ENCODE measurements at regions of chr22 and their contacts with region 1.

Region 1: DNA sequence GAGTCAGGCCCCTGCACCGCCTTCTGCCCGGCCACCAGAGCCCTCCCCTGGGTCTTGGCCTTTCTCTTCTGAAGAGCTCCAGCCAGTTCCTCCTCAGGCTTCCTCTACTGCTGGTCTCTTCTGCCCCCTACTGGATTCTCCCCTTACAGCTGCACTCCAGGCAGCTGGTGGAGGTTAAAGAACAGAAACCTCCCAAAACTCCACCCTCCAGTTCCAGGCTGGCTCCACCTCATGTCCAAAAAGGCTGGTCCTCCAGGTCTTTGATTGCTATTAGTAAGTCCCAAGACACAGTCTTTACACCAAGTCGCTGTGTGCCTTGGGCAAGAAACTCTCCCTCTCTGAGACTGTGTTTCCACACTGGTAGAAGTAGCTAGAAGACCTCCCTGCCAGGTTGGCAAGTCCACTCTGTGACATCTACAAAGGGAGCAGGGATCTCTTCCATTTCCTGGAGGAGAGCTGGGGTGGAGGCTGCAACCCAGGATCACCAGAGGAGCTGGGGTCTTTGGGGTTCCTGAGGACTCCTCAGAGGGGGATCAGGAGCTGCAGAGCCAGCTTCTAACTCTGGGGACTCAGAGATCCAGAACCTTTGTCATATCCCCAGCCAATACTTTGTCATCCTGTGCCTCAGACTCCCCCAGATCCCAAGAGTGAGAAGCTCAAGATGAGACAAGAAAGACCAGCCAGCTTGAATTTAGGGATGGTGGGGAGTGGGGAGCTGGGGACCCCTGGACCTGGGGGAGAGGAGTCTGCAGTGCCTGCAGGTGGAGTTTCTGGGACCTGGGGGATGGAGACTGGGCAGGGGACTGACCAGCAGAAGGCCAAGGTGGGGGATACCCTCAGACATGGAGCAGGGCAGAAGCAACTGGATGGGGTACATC is 3.4 kb upstream of the IGLL5 start:
- DNase-seq: peak; percentile 85
- H3K4me3 Mint-ChIP-seq: no peak overlapping the region
- H3K27ac Mint-ChIP-seq: no peak overlapping the region
- H3K4me1 Mint-ChIP-seq: peaks cover 18% of the 10 kb centered on the region
- H3K27me3 Mint-ChIP-seq: peaks cover 91% of the 10 kb centered on the region

Region 2: DNA sequence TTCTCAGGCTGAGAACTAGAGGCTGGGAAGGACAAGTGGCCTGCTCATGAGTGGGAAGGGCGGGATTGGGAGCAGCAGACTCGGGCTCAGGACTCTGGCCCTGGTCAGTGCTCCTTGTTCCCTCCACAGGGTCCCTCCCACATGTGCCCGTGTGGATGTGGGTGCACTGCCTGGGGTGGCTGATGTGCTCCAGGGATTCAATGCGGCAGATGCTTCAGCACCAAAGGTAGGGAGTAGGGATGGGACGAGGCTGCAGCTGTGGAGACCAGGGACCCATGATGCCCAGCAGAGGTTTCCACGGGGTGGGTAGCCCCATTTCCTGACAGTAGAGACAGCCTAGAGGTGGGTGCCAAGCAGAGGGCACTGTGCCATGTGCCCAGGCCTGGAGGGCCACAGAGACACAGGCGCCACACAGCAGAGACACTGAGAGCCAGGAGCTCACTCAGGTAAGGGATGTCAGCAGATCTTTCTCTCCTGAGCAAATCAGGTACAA is 150.3 kb before region 1 on chr22:
- CTCF ChIA-PET with region 1: no interaction called
- DNase-seq: no peak
- H3K4me3 Mint-ChIP-seq: no peak overlapping the region
- H3K27ac Mint-ChIP-seq: no peak overlapping the region
- H3K4me1 Mint-ChIP-seq: no peaks in the 10 kb centered on the region
- H3K27me3 Mint-ChIP-seq: peaks cover 50% of the 10 kb centered on the region

Region 3: DNA sequence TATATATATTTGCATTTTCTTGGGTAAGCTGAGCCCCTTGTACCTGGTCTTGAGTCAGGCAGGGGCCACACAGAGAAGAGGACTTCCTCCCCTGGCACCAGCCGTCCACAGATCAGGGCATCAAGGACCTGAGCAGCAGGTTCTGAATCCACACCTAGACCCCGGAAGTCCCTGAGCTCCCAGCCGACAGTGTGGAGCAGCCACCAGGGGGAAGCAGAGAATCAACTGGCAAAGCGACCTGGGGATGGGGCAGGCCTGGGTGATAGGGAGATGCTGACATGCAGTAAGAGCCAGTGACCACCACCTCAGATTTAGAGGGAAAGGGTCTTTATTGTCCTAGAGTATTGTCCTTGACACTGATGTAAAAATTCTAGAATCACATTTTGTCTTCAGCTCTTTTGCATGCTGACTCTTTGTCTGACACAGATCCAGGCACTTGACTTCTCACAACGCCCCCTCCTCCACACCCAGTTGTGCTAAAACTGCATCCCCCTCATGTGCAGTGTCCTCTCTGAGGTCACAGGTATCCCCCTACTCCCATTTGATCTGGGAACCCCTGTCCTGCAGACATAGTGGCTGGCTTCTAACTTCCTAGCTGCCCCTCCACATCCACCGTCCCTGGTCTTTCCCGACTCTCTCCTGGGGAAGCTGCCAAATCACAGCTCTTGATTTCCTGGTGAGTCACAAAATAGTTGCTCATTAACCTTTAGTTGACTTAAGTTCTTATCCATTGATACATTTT is 130.6 kb before region 1 on chr22:
- CTCF ChIA-PET with region 1: interaction called, 61 read pairs
- DNase-seq: peak; percentile 87
- H3K4me3 Mint-ChIP-seq: no peak overlapping the region
- H3K27ac Mint-ChIP-seq: no peak overlapping the region
- H3K4me1 Mint-ChIP-seq: peaks cover 7% of the 10 kb centered on the region
- H3K27me3 Mint-ChIP-seq: peaks cover 19% of the 10 kb centered on the region

Region 4: GRCh38 chr22:22787786-22788459 is 96.3 kb before region 1 on chr22:
- CTCF ChIA-PET with region 1: interaction called, 96 read pairs
- DNase-seq: peak; percentile 78
- H3K4me3 Mint-ChIP-seq: no peak overlapping the region
- H3K27ac Mint-ChIP-seq: no peak overlapping the region
- H3K4me1 Mint-ChIP-seq: peaks cover 16% of the 10 kb centered on the region
- H3K27me3 Mint-ChIP-seq: peaks cover 38% of the 10 kb centered on the region

Region 5: GRCh38 chr22:22810018-22810427 is 74.2 kb before region 1 on chr22:
- CTCF ChIA-PET with region 1: interaction called, 191 read pairs
- DNase-seq: peak; percentile 85
- H3K4me3 Mint-ChIP-seq: no peak overlapping the region
- H3K27ac Mint-ChIP-seq: no peak overlapping the region
- H3K4me1 Mint-ChIP-seq: peaks cover 23% of the 10 kb centered on the region
- H3K27me3 Mint-ChIP-seq: peaks cover 23% of the 10 kb centered on the region

Region 6: DNA sequence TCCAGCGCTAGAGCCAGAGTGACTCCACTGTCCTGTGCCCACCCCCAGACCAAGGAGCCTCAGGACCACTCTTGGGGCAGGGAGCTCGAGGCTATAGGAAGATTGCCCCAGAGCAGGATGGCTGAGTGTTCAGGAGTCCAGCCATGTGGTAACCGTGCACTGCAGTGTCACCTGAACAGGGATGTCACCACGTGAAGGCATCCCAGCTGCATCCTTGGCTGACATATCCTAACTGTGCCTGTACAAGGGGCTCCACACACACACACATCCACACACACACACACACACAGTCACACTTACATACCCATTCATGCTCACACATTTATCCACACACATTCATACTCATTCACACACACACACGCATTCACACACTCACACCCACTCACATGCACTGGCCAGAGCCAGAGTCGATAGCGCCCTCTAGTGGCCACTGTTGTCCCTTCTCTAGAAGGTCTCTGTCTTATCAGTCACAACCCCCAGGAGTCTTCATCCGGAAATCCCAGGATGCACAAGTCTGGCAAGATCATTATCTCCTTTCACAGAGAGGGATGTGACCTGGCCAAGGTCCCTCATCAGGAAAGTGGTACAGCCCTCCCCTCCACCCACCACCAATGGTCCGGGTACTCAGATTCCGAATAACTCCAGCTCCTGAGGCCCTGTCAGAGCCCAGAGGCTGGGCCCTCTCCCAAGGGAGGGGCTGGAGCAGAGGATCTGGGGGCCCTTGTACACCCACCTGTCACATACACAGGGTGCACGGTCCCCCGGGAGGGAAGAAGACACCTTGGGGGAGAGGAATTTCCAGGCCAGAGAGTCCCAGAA is 58.5 kb after region 1 on chr22:
- CTCF ChIA-PET with region 1: interaction called, 17 read pairs
- DNase-seq: peak; percentile 89
- H3K4me3 Mint-ChIP-seq: no peak overlapping the region
- H3K27ac Mint-ChIP-seq: no peak overlapping the region
- H3K4me1 Mint-ChIP-seq: peaks cover 2% of the 10 kb centered on the region
- H3K27me3 Mint-ChIP-seq: peaks cover 67% of the 10 kb centered on the region

Region 7: GRCh38 chr22:23036684-23037428 is 152.6 kb after region 1 on chr22:
- CTCF ChIA-PET with region 1: no interaction called
- DNase-seq: no peak
- H3K4me3 Mint-ChIP-seq: no peak overlapping the region
- H3K27ac Mint-ChIP-seq: no peak overlapping the region
- H3K4me1 Mint-ChIP-seq: peaks cover 7% of the 10 kb centered on the region
- H3K27me3 Mint-ChIP-seq: peaks cover 52% of the 10 kb centered on the region